ENCODE measurements at regions of chr5 and their contacts with region 1.

Region 1: DNA sequence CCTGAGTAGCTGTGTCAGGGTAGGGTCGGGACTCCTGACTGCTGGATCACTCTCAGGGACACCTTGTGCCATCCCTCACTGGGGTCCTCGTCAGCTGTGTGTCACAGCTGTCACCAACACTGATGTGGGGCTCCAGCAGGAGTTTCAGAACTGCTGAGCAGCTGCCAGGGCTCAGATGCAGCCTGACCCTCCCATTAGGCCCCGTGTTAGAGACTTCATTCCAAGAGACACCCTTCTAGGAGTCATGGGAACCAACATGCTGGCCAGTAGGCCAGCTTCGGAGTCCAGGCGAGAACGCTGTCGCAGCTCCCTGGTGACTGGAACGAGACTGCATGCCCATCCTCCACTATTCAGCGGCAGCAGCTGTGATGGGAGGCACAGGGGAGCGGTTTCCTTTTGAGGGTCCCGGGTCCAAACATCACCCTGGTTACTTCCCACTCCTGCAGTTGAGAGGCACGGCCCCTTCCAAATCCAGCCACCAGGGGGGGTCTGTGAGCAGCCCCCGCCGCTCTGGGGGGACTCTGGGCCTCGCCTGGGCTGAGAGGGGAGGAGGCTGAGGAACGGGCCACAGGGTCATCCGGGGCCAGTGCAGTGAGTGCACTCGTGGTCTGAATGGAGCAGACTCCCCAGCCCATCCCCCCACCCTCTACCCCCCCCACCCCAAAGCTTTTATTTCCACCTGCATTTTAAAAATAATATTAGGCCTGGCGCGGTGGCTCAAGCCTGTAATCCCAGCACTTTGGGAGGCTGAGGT is 12.6 kb upstream of the TCF7 start:
- DNase-seq: no peak
- H3K4me3 ChIP-seq: no peak overlapping the region
- H3K27ac ChIP-seq: no peak overlapping the region
- H3K27me3 ChIP-seq: peaks cover 18% of the 10 kb centered on the region
- CTCF ChIP-seq: peak; percentile 87

Region 2: GRCh38 chr5:132915681-132916080 is 1186.2 kb before region 1 on chr5:
- CTCF ChIA-PET with region 1: no interaction called
- POLR2A ChIA-PET with region 1: no interaction called
- DNase-seq: no peak
- H3K4me3 ChIP-seq: no peak overlapping the region
- H3K27ac ChIP-seq: no peak overlapping the region
- H3K27me3 ChIP-seq: no peaks in the 10 kb centered on the region
- CTCF ChIP-seq: no peak

Region 3: DNA sequence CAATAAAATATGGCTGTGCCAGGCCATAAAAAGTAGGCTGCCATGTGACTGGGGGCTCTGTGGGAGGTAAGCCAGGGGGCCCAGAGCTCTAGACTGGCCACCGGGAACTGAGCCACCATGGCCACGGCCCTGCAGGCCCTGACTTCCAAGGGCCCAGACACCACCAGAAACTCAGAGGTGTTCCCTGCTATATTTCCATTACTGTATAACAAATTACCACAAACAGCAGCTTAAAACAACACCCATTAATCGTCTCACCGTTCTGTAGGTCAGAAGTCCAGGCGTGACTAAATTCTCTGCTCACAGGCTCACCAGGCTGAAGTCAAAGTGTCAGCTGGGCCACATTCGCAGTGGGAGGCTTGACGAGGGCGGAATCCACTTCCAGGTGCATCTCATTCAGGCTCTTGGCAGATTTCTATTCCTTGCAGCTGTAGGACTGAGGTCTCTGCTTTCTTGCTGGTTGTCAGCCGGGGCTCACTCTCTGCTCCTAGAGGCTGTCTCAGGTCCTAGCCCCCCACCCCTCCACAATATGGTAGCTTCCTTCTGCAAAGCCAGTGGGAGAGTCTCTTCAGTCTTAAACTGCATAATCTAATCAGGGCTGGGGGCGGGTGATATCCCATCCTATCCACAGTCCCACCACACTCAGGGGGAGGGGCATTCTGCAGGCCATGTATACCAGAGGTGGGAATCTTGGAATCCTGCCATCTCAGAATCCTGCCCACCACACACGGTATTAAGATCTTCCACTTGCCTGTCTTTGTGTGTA is 258.8 kb before region 1 on chr5:
- CTCF ChIA-PET with region 1: no interaction called
- POLR2A ChIA-PET with region 1: no interaction called
- DNase-seq: no peak
- H3K4me3 ChIP-seq: no peak overlapping the region
- H3K27ac ChIP-seq: no peak overlapping the region
- H3K27me3 ChIP-seq: peaks cover 31% of the 10 kb centered on the region
- CTCF ChIP-seq: no peak

Region 4: GRCh38 chr5:134086943-134087305 is 14.9 kb before region 1 on chr5:
- CTCF ChIA-PET with region 1: interaction called, 14 read pairs
- POLR2A ChIA-PET with region 1: no interaction called
- DNase-seq: no peak
- H3K4me3 ChIP-seq: no peak overlapping the region
- H3K27ac ChIP-seq: no peak overlapping the region
- H3K27me3 ChIP-seq: peaks cover 31% of the 10 kb centered on the region
- CTCF ChIP-seq: no peak

Region 5: DNA sequence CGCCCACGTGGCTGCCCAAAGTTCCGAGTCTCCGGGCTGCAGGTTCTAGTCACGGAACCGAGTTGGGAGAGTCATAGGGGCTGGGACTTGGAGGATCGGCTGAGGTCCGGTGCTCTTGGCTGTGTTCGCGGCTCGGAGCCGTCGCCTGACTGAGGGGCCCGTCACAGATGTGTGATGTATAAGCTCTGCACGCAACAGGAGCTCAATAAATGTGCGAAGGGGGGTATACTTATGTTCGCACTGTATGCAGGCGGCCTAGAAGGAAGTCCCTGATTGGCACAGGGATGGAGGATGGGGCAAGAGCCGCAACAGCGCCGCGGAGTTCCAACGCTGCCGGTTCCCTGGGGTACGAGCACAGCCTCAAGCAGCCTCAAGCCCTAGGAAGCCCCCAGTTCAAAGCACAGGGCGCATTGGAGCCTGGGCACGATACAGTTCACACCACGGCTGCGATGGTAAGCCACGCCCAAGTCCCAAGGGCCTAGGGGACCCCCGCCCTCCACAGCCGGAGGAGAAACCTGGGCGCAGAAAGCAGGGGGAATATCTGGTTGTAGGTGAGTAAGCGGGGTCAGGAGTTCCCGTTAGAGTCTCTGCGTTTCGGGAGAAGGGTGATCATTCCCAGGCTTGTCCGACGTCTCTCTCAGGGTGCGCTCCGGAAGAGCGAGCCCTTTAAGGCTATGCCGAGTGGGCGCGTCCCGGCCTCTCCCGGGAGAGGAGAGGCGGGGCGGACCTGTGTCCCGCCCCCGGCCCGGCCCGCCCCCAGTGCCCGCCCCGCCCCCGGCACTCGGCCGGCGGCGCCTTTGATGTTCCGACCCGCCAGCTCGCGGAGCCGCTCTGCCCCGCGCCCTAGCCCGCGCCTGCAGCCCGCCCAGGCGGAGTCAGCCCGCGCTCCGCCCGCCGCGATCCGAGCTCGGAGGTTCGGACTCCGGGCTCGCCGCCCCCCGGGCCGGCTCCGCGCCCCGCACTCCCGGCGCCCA is 12.3 kb after region 1 on chr5 and contains the start of gene TCF7:
- CTCF ChIA-PET with region 1: interaction called, 34 read pairs
- POLR2A ChIA-PET with region 1: no interaction called
- DNase-seq: peak; percentile 55
- H3K4me3 ChIP-seq: peak within 1 kb of the TSS; percentile 64
- H3K27ac ChIP-seq: no peak within 1 kb of the TSS
- H3K27me3 ChIP-seq: peaks cover 6% of the 10 kb centered on the region
- CTCF ChIP-seq: no peak
- polyA plus RNA-seq, gene TCF7: 2.1 and 2.7 TPM in 2 replicates

Region 6: DNA sequence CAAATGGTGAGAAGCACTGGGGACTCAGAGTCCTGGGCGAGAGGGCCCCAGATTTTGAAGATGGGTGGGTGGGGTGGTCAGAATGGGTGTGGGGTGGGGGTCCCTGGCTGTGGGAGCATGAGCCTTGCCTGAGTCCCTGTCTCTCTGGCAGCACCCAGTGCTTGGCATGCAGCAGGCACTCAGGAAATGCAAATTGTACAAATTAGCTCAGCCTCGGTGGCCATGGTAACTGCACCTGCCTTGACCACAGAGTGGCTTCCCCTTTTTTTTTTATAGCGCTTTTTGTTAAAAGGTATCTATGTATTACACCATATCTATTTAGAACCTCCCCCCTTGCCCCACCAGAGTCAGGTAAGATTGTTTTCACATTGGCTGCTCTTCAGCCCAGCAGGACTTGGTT is 951.4 kb after region 1 on chr5:
- CTCF ChIA-PET with region 1: no interaction called
- POLR2A ChIA-PET with region 1: no interaction called
- DNase-seq: no peak
- H3K4me3 ChIP-seq: no peak overlapping the region
- H3K27ac ChIP-seq: no peak overlapping the region
- H3K27me3 ChIP-seq: peaks cover 50% of the 10 kb centered on the region
- CTCF ChIP-seq: no peak

Measured in AG04450 (cell line).